Spleen (tissue), 13 donors: ENCODE measurements at regions of chr21 and their contacts with region 1.

Region 1: DNA sequence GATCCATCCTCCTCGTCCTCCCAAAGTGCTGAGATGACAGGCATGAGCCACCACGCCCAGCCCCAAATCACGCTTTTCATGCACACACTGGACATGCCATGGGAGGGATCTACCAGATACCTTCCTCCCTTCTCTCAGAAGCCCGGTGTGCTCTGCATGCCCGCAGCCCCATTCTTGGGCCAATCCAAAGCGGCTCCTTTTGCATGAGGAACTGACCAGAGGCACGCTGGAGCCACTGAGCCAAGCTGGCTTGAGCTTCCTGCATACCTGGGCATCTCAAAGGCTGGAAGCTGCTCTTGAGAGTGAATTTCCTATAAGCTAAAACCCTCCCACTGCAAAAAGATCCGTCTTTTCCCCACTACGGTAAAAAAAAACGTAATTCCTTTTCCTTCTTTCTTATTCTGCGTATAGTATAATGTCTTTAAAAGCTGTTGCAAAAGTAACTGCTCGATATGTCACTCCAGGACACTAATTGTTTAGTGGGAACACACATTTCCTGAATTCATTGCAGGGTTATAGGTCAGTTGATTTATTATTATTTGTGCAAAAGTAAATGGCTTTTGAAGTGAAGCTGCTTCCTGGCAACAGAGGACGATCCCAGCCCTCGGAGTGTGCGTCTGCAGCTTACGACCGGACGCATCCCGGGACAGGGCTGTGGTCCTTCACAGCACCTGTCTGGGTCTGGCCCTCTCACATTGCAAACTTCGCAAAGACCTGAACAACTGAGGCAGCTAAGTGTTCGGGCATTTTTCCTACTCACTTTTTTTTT is 61.8 kb upstream of the ETS2 start:
- DNase-seq: no peak
- H3K4me3 ChIP-seq: peak overlapping the region in 3 of 8 donors; percentile 5 to 45 (median 25)
- H3K27ac ChIP-seq: peak overlapping the region in 4 of 8 donors; percentile 3 to 59 (median 26)
- H3K4me1 ChIP-seq: peaks cover 0 to 31% (median 3%) of the 10 kb centered on the region in 6 donors
- H3K27me3 ChIP-seq: no peaks in the 10 kb centered on the region
- CTCF ChIP-seq: no peak
- POLR2A ChIP-seq: no peak

Region 2: DNA sequence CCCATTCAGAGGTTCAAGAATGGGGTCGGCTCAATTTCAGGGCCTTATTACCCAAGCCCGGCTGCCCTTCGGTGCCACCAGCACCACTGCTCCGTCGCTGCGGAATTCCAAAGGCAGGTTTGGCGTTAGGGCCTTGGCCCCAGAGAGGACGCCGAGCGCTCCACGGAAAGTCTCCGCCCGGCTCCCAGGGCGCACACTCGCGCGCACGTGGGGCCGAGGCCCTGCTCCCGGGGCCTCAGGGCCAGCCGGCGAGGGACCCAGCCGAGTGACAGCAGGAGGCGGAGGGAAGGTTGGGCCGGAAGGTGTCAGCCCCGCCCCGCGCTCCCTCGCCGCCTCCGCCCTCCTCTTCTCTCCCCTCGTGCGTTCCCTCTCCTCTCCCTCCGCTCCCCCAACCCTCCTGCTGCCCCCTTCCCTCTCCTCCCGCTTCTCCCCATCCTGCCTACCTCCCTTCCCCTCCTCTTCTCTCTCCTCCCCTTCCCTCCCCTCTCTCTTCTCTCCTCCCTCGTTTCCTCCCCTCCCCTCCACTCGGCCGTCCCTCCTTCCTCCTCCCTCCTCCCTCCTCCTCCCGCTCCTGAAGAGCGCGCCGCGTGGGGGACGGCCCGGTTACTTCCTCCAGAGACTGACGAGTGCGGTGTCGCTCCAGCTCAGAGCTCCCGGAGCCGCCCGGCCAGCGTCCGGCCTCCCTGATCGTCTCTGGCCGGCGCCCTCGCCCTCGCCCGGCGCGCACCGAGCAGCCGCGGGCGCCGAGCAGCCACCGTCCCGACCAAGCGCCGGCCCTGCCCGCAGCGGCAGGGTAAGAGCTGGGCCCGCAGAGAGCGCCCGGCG is 61.6 kb after region 1 on chr21 and contains the start of gene ETS2:
- intact Hi-C with region 1: loop called (anchors 10 kb)
- DNase-seq: peak; percentile 97
- H3K4me3 ChIP-seq: peak within 1 kb of the TSS; percentile 60 to 90 (median 76)
- H3K27ac ChIP-seq: peak within 1 kb of the TSS; percentile 90 to 99 (median 98)
- H3K4me1 ChIP-seq: peaks cover 0 to 65% (median 29%) of the 10 kb centered on the region in 6 donors
- H3K27me3 ChIP-seq: peaks cover 0 to 12% (median 0%) of the 10 kb centered on the region in 7 donors
- CTCF ChIP-seq: peak in 1 of 11 experiments; percentile 5
- POLR2A ChIP-seq: peak; percentile 83 to 95 (median 89)
- total RNA-seq, gene ETS2: 287 to 590 (median 388) TPM